Right cardiac atrium (tissue), 5 donors: ENCODE measurements at regions of chr14 and their contacts with region 1.

Region 1: DNA sequence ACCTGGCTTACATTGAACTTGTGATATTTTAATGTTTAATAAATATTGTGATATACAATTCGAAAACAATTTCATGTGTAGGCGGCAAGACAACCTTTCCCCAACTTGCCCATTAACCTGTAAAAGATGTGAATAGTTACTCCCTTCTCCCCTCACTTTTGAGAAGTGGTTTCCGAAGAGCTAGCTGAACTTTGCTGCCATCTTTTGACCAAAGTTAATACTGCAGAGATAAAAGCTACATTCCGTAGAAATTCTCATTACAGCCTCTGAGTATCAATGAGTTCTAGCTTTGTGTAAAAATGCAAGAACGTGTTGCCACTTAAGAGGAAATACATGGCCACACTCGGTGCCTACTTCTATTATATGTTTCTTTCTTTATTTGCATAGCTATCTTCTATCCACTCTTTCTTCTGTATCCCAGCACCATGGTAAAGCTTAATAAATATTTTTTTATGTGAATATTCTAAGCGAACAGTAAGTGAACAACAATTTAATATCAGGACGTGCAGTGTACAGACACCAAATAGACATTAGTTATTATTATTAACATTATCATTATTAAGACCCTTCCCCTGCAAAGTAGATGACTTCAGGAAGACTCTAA is 105.1 kb upstream of the TMEM260 start:
- DNase-seq: no peak
- ATAC-seq: peak in 1 of 2 donors; percentile 51
- H3K4me3 ChIP-seq: no peak overlapping the region
- H3K27ac ChIP-seq: no peak overlapping the region
- H3K4me1 ChIP-seq: no peaks in the 10 kb centered on the region
- H3K27me3 ChIP-seq: no peaks in the 10 kb centered on the region

Region 2: DNA sequence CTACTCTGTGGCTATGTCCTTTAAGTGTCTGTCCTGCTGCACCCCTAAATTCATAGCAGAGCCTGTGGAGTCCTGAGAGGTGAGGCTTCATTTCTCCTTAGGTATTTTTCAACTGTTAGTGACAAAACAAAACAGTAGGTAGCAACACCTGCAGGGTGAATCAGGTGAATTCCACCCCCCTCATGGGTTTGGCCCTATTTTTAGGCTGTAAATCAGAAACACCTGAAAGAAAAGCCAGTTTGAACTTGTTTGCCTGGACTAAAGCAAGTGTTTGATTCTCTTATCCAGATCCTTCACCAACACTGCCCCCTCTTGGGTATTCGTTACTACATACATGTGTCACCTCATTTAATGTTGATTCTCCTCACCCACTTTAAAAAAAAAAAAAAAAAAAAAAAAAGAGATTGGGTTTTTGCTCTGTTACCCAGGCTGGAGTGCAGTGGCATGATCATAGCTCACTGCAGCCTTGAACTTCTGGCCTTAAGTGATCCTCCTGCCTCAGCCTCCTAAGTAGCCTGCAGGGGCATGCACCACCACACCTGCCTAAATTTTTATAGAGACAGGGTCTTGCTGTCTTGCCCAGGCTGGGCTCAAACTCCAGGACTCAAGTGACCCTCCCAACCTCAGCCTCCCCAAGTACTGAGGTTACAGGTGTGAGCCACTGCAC is 1044.4 kb before region 1 on chr14:
- intact Hi-C with region 1: loop called in 1 of 4 experiments (anchors 10 kb)
- DNase-seq: no peak
- ATAC-seq: peak; percentile 75 to 78
- H3K4me3 ChIP-seq: no peak overlapping the region
- H3K27ac ChIP-seq: no peak overlapping the region
- H3K4me1 ChIP-seq: no peaks in the 10 kb centered on the region
- H3K27me3 ChIP-seq: no peaks in the 10 kb centered on the region

Region 3: GRCh38 chr14:55446218-55446654 is 1028.3 kb before region 1 on chr14:
- intact Hi-C with region 1: loop called in 2 of 4 experiments (anchors 10 kb)
- DNase-seq: peak in 1 of 3 donors; percentile 29
- ATAC-seq: peak; percentile 51 to 67
- H3K4me3 ChIP-seq: no peak overlapping the region
- H3K27ac ChIP-seq: no peak overlapping the region
- H3K4me1 ChIP-seq: peaks cover 1% of the 10 kb centered on the region
- H3K27me3 ChIP-seq: no peaks in the 10 kb centered on the region

Region 4: GRCh38 chr14:55707365-55707804 is 767.1 kb before region 1 on chr14:
- intact Hi-C with region 1: loop called in 3 of 4 experiments (anchors 5 to 10 kb)
- DNase-seq: no peak
- ATAC-seq: peak in 1 of 2 donors; percentile 44
- H3K4me3 ChIP-seq: no peak overlapping the region
- H3K27ac ChIP-seq: no peak overlapping the region
- H3K4me1 ChIP-seq: no peaks in the 10 kb centered on the region
- H3K27me3 ChIP-seq: no peaks in the 10 kb centered on the region

Region 5: DNA sequence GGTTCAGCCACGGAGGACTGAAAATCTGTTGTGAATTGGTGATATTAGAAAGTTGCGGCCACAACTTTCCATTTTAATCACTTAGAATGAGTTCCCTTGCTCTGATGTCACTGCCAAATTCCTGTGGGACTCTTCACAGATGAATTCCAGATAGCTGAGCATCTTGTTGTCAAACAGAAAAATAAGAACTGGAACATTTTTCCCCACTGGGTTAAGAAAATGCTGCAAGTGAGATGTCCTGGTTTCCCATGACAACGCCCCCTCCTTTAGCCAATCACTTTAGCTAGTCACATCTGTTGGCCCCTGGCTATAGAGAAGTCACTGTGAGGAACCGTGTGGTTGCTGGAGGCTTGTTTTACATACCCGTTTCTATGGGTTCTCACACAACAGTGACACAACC is 758.6 kb before region 1 on chr14:
- intact Hi-C with region 1: loop called in 2 of 4 experiments (anchors 5 to 10 kb)
- DNase-seq: no peak
- ATAC-seq: peak in 1 of 2 donors; percentile 63
- H3K4me3 ChIP-seq: no peak overlapping the region
- H3K27ac ChIP-seq: peak overlapping the region; percentile 40
- H3K4me1 ChIP-seq: no peaks in the 10 kb centered on the region
- H3K27me3 ChIP-seq: no peaks in the 10 kb centered on the region

Region 6: GRCh38 chr14:56224229-56224628 is 250.3 kb before region 1 on chr14:
- intact Hi-C with region 1: no loop called
- DNase-seq: no peak
- ATAC-seq: no peak
- H3K4me3 ChIP-seq: no peak overlapping the region
- H3K27ac ChIP-seq: no peak overlapping the region
- H3K4me1 ChIP-seq: peaks cover 8% of the 10 kb centered on the region
- H3K27me3 ChIP-seq: no peaks in the 10 kb centered on the region